ENCODE measurements at regions of chr3 and their contacts with region 1.

Region 1: GRCh38 chr3:194573691-194574437 is 59.4 kb downstream of the TMEM44 start:
- DNase-seq: no peak

Region 2: GRCh38 chr3:194250098-194251002 is 323.5 kb before region 1 on chr3:
- intact Hi-C with region 1: no loop called
- DNase-seq: peak; percentile 81

Region 3: GRCh38 chr3:194418671-194419070 is 155.2 kb before region 1 on chr3:
- intact Hi-C with region 1: loop called (anchors 5 kb)
- DNase-seq: no peak

Region 4: DNA sequence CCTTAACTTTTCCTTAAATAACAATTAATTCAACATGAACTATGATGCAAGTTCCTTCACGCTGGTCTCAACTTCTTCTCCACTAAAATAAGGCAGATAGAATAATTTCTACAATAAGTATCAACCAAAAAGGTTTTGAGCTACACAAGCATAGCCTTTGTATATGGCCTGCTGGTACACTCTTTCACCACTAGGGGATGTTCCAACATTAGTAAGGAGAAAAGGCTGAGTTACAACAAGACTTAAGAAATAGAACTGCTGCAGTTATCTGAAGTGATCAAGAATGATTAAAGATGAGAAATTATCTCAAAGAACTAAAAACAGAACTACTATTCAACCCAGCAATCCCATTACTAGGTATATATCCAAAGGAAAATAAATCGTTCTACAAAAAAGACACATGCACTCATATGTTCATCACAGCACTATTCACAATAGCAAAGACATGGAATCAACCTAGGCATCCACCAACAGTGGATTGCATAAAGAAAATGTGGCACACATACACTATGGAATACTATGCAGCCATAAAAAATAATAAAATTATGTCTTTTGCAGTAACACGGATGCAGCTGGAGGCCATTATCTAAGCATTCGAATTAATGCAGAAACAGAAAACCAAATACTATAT is 101.5 kb before region 1 on chr3:
- intact Hi-C with region 1: loop called (anchors 1 kb)
- DNase-seq: no peak

Region 5: DNA sequence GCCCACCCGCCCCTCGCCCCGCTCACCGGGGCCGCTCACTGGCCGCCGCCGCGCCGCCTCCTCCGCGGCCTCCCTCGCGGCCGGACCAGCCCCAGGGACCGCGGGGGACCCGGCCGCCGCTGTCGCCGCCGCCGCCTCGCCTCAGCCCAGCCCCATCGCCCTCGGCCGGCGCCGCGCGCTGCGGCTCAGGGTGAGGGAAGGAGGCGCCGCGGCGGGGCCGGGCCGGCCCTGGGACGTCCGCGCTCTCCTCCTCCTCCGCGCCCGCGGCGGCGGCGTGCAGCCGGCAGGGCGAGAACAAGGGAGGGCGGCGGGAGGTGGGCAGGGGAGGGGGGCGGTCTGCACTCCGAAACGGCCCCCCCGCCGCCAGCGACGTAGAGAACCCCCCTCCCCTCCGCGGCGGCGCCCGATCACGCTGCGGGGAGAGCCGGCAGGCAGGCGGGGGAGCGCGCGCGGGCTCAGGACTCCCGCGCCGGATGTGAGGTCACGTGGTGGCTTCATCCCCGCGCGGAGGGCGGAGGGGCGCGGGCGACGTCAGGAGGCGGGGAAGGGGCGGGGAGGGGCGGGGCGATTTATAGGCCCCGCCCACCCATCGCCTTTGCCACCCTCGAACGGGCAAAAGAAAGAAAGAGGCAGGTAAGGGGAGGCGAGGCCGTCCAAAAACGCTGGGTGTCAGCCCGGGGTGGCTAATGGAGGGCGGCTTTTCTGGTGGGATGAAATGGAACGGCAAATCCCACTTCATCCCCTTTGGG is 87.2 kb before region 1 on chr3 and contains the start of gene ATP13A3:
- intact Hi-C with region 1: loop called (anchors 5 kb)
- DNase-seq: peak; percentile 94
- total RNA-seq, gene ATP13A3: 217 TPM

Region 6: DNA sequence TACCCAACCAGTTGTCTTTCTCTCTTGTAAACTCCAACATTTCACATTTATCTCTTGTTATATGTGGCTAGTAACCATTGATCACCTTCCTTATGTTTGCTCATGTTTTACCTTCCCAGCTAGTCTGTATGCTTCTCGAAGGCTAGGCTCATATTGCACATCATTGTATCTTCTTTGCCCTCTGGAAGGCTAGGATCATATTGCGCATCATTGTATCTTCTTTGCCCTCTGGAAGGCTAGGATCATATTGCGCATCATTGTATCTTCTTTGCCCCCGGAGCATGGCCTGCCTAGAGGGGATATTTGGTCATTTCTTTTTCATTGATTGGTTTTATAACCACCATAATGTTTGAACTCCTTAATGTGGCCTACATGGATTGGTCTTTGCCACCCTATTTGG is 47.7 kb before region 1 on chr3:
- intact Hi-C with region 1: loop called (anchors 5 kb)
- DNase-seq: no peak

Measured in cardiac septum (tissue), 1 donor.